ENCODE measurements at regions of chr9 and their contacts with region 1.

Region 1: DNA sequence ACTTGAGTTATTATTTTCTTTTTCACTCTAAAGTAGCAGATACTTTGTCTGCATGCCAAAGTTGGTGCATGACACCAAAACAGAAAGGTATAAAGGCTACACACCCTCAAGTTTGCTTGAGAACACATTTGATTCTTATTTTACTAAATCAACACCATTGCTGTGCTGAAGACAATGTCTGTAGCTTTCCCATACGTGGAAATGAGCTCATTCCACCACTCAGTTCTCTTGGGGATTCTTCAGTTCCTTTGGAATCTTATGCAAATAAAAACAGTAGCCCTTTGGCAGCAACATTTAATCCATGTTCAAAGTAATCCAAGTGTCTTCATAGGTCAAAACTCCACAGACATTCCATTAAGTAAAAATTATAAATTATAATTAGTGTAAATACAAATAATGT is 264.9 kb downstream of the TLE1 start:
- DNase-seq: no peak
- ATAC-seq: peak in 1 of 8 donors; percentile 31
- H3K4me3 ChIP-seq: no peak overlapping the region
- H3K27ac ChIP-seq: no peak overlapping the region
- H3K4me1 ChIP-seq: no peaks in the 10 kb centered on the region
- H3K27me3 ChIP-seq: no peaks in the 10 kb centered on the region
- CTCF ChIP-seq: no peak

Region 2: GRCh38 chr9:81244631-81245030 is 179.8 kb before region 1 on chr9:
- intact Hi-C with region 1: no loop called
- DNase-seq: no peak
- ATAC-seq: no peak
- H3K4me3 ChIP-seq: no peak overlapping the region
- H3K27ac ChIP-seq: no peak overlapping the region
- H3K4me1 ChIP-seq: no peaks in the 10 kb centered on the region
- H3K27me3 ChIP-seq: no peaks in the 10 kb centered on the region
- CTCF ChIP-seq: no peak

Region 3: DNA sequence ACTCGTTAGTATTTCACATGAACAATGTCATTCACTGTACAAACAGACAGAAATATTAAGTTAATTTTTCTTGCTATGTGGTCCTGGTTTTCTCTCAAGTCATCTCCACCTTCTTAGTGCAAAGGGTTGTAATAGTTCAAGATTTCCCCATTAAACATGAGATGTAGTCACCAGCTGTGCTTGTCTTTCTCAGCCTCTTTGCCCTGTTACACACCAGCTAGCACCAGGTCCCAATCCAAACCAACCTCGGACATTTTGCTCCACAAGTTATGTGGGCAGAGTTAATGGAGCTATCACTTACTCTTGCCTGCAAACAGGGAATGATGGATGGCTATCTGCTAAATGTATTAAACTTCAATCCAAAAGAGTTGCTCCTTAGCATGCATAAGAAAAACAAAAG is 63.1 kb before region 1 on chr9:
- intact Hi-C with region 1: no loop called
- DNase-seq: no peak
- ATAC-seq: no peak
- H3K4me3 ChIP-seq: no peak overlapping the region
- H3K27ac ChIP-seq: no peak overlapping the region
- H3K4me1 ChIP-seq: no peaks in the 10 kb centered on the region
- H3K27me3 ChIP-seq: no peaks in the 10 kb centered on the region
- CTCF ChIP-seq: no peak

Region 4: GRCh38 chr9:81374459-81375186 is 49.8 kb before region 1 on chr9:
- intact Hi-C with region 1: loop called in 1 of 10 experiments (anchors 10 kb)
- DNase-seq: peak in 1 of 2 donors; percentile 38
- ATAC-seq: peak; percentile 44 to 69 (median 51)
- H3K4me3 ChIP-seq: no peak overlapping the region
- H3K27ac ChIP-seq: peak overlapping the region in 4 of 10 donors; percentile 55 to 67 (median 57)
- H3K4me1 ChIP-seq: peaks cover 0 to 48% (median 23%) of the 10 kb centered on the region in 9 donors
- H3K27me3 ChIP-seq: no peaks in the 10 kb centered on the region
- CTCF ChIP-seq: no peak